ENCODE measurements at regions of chr5 and their contacts with region 1.

Region 1: DNA sequence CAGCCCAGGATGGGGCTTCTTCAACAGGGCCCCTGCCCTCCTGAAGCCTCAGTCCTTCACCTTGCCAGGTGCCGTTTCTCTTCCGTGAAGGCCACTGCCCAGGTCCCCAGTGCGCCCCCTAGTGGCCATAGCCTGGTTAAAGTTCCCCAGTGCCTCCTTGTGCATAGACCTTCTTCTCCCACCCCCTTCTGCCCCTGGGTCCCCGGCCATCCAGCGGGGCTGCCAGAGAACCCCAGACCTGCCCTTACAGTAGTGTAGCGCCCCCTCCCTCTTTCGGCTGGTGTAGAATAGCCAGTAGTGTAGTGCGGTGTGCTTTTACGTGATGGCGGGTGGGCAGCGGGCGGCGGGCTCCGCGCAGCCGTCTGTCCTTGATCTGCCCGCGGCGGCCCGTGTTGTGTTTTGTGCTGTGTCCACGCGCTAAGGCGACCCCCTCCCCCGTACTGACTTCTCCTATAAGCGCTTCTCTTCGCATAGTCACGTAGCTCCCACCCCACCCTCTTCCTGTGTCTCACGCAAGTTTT is 23.6 kb downstream of the PCDHGC5 start:
- DNase-seq: peak; percentile 91
- H3K4me3 Mint-ChIP-seq: peak overlapping the region; percentile 71
- H3K27ac Mint-ChIP-seq: no peak overlapping the region
- H3K4me1 Mint-ChIP-seq: peaks cover 30% of the 10 kb centered on the region
- H3K27me3 Mint-ChIP-seq: no peaks in the 10 kb centered on the region

Region 2: GRCh38 chr5:141320225-141321169 is 192.0 kb before region 1 on chr5 and contains the start of gene TAF7:
- CTCF ChIA-PET with region 1: interaction called, 20 read pairs
- POLR2A ChIA-PET with region 1: no interaction called
- intact Hi-C with region 1: loop called (anchors 1 kb)
- DNase-seq: peak; percentile 95
- H3K4me3 Mint-ChIP-seq: peak within 1 kb of the TSS; percentile 98
- H3K27ac Mint-ChIP-seq: peak within 1 kb of the TSS; percentile 99
- H3K4me1 Mint-ChIP-seq: peaks cover 23% of the 10 kb centered on the region
- H3K27me3 Mint-ChIP-seq: no peaks in the 10 kb centered on the region
- total RNA-seq, gene TAF7: 54.6 to 55.5 TPM

Region 3: DNA sequence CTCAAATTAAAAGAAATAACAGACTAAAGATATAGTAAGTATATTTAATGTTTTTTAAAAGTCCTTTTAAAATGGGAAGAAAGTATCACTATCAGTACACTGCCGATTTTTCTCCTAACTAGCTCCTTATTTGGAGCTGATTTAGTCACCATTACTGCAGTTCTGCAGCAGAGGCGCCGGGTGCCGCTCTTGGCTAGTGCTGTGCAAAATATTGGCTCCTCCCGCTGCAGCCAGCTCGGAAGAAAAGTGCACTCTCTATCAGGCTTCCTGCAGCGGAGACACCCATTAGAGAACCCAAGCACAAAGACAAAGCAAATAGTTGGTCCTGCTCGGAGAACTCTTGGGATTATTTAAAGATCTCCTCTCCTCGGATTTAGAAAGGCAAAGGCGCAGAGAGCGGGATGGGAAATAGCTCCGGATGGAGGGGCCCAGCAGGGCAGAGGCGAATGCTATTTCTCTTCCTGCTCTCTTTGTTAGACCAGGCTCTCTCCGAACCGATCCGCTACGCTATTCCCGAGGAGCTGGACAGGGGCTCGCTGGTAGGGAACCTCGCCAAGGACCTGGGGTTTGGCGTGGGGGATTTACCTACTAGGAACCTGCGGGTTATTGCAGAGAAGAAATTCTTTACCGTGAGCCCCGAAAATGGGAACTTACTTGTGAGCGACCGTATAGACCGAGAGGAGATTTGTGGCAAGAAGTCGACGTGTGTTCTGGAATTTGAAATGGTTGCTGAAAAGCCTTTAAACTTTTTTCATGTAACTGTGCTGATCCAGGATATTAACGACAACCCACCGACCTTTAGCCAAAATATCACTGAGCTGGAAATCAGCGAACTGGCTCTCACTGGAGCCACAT is 142.2 kb before region 1 on chr5 and contains the start of gene PCDHGB3:
- CTCF ChIA-PET with region 1: interaction called, 25 read pairs
- POLR2A ChIA-PET with region 1: no interaction called
- intact Hi-C with region 1: no loop called
- DNase-seq: peak; percentile 55
- H3K4me3 Mint-ChIP-seq: peak within 1 kb of the TSS; percentile 68
- H3K27ac Mint-ChIP-seq: no peak within 1 kb of the TSS
- H3K4me1 Mint-ChIP-seq: peaks cover 5% of the 10 kb centered on the region
- H3K27me3 Mint-ChIP-seq: peaks cover 48% of the 10 kb centered on the region
- total RNA-seq, gene PCDHGB3: 0.10 TPM in 1 of 2 experiments, not detected in the other

Region 4: GRCh38 chr5:141420855-141421496 is 91.5 kb before region 1 on chr5 and contains the start of gene PCDHGA11:
- CTCF ChIA-PET with region 1: interaction called, 27 read pairs
- POLR2A ChIA-PET with region 1: no interaction called
- intact Hi-C with region 1: no loop called
- DNase-seq: peak; percentile 66
- H3K4me3 Mint-ChIP-seq: peak within 1 kb of the TSS; percentile 72
- H3K27ac Mint-ChIP-seq: no peak within 1 kb of the TSS
- H3K4me1 Mint-ChIP-seq: peaks cover 4% of the 10 kb centered on the region
- H3K27me3 Mint-ChIP-seq: peaks cover 68% of the 10 kb centered on the region
- total RNA-seq, gene PCDHGA11: 0.05 TPM in 1 of 2 experiments, not detected in the other

Region 5: DNA sequence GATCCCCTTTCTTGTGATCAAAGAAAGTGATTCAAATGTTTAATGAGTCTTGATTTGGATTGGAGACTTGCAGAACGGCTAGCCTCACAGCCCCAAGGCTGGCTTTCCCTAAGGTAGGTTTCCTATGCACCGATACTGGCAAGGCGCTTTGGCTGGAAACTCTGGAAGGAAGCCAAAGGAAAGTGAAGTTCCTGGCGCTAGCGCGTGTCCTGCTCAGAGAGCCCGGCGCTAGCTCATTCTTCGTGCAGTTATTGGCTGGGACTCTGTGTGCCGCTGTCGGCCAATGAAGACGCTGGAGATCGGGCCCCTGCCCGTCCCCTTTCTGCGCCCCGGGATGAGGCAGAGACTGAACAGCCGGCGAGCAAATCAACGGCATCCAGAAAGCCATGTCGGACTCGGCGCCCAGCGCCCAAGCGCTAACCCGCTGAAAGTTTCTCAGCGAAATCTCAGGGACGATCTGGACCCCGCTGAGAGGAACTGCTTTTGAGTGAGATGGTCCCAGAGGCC is 36.8 kb before region 1 on chr5 and contains the start of gene PCDHGC3:
- CTCF ChIA-PET with region 1: interaction called, 6 read pairs
- POLR2A ChIA-PET with region 1: no interaction called
- intact Hi-C with region 1: loop called (anchors 1 kb)
- DNase-seq: peak; percentile 72
- H3K4me3 Mint-ChIP-seq: peak within 1 kb of the TSS; percentile 79
- H3K27ac Mint-ChIP-seq: no peak within 1 kb of the TSS
- H3K4me1 Mint-ChIP-seq: peaks cover 20% of the 10 kb centered on the region
- H3K27me3 Mint-ChIP-seq: peaks cover 48% of the 10 kb centered on the region
- total RNA-seq, gene PCDHGC3: not detected

Region 6: DNA sequence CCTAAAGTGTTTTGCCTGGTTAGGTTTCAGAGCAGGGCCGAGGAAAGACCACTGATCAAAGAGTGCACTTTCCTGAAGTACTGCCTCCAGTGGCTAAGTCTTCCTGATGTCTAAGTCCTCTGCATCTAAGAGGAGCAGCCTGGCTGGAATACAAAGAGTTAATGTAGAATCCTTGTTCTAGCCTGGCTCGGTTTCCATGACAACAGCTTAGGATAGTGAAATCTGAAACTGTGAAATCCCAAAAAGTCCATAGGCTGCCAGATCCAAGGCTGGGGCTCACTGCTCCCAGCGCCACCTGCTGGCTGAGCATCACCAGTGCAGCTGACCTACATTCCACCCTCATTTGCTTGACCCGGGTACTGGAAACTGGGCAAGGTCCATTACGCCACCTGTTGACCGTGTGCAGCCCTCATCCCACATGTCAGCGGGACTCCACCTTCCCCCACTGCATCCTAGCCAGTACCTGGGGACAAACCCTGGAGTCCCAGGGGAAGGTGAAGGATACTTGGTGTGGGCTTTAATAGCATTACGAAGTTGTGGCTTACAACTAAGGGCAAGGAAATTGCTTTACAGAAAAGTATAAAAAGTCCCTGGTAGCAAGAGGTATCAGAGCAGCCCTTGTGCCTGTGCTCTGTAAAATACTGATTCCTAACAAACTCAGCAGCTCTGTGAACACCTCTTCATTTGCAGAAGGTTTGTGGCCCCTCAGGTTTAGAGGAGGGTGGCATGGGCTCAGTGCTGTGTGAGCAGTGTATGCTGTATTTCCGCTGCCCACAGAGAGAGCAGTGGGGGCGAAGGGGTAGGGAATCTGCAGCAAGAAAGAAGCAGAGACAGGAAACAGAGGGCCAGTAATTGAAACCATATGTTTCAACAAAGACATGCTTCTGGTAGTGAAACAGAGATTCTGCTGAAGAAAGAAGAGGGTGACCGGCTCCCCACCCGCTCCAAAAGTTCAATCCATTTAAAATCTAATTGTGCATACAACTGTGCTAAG is 12.5 kb after region 1 on chr5:
- CTCF ChIA-PET with region 1: interaction called, 139 read pairs
- POLR2A ChIA-PET with region 1: interaction called, 6 read pairs
- intact Hi-C with region 1: loop called (anchors 1 kb)
- DNase-seq: peak; percentile 60
- H3K4me3 Mint-ChIP-seq: no peak overlapping the region
- H3K27ac Mint-ChIP-seq: peak overlapping the region; percentile 15
- H3K4me1 Mint-ChIP-seq: peaks cover 36% of the 10 kb centered on the region
- H3K27me3 Mint-ChIP-seq: no peaks in the 10 kb centered on the region

Region 7: GRCh38 chr5:141729387-141730006 is 217.0 kb after region 1 on chr5:
- CTCF ChIA-PET with region 1: no interaction called
- POLR2A ChIA-PET with region 1: no interaction called
- intact Hi-C with region 1: no loop called
- DNase-seq: no peak
- H3K4me3 Mint-ChIP-seq: no peak overlapping the region
- H3K27ac Mint-ChIP-seq: no peak overlapping the region
- H3K4me1 Mint-ChIP-seq: no peaks in the 10 kb centered on the region
- H3K27me3 Mint-ChIP-seq: no peaks in the 10 kb centered on the region